Heart left ventricle (tissue), 16 donors: ENCODE measurements at regions of chr1 and their contacts with region 1.

Region 1: GRCh38 chr1:118077331-118078055 is 107.5 kb downstream of the SPAG17 start:
- DNase-seq: no peak
- ATAC-seq: no peak
- H3K4me3 ChIP-seq: no peak overlapping the region
- H3K27ac ChIP-seq: no peak overlapping the region
- H3K4me1 ChIP-seq: no peaks in the 10 kb centered on the region
- H3K27me3 ChIP-seq: peaks cover 0 to 4% (median 0%) of the 10 kb centered on the region in 9 donors
- CTCF ChIP-seq: peak in 8 of 12 donors; percentile 6 to 41 (median 28)
- POLR2A ChIP-seq: no peak

Region 2: GRCh38 chr1:118049981-118050380 is 27.5 kb before region 1 on chr1:
- intact Hi-C with region 1: no loop called
- DNase-seq: no peak
- ATAC-seq: no peak
- H3K4me3 ChIP-seq: no peak overlapping the region
- H3K27ac ChIP-seq: no peak overlapping the region
- H3K4me1 ChIP-seq: no peaks in the 10 kb centered on the region
- H3K27me3 ChIP-seq: no peaks in the 10 kb centered on the region
- CTCF ChIP-seq: no peak
- POLR2A ChIP-seq: no peak

Region 3: DNA sequence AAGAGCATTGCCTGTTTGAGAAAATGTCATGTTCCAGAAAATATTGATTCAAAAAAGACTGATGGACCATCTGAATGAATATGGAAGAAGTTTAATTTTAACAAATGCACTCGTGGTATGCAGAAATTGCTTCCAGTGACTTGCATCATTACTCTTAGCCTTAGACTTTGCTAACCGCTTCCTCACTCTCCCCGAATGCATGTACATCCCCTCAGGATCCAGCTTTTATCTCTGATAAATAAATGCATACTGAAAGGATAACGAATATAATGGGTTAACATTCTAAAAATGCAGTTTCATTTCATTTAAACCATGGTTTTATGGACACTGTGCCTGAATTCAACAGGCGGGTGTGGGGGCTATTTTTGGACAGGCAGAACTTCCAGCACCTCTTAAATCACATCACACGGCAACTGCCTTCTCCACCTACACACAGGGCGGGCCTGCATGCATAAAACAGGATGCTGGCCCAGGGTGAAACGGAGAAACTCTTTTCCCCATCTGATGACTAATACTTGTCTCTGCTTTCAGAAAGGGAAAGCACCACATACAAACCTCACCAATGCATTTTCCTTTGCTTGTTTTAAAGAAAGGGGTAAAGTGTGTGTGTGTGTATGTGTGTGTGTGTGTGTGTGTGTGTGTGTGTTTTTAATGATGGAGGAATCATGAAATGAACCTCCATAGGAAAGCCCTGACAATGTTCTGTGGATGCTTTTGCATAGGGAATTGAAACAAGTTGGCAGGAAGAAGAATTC is 58.9 kb after region 1 on chr1:
- intact Hi-C with region 1: loop called in 1 of 10 experiments (anchors 10 kb)
- DNase-seq: peak in 1 of 5 donors; percentile 34
- ATAC-seq: peak in 1 of 4 donors; percentile 67
- H3K4me3 ChIP-seq: no peak overlapping the region
- H3K27ac ChIP-seq: no peak overlapping the region
- H3K4me1 ChIP-seq: no peaks in the 10 kb centered on the region
- H3K27me3 ChIP-seq: peaks cover 0 to 16% (median 0%) of the 10 kb centered on the region in 9 donors
- CTCF ChIP-seq: no peak
- POLR2A ChIP-seq: no peak